Mammary epithelial cell (primary cell): ENCODE measurements at regions of chr2 and their contacts with region 1.

Region 1: GRCh38 chr2:224086226-224086914 is 47.3 kb upstream of the SERPINE2 start:
- DNase-seq: peak; percentile 97
- H3K4me3 ChIP-seq: no peak overlapping the region
- H3K27ac ChIP-seq: peak overlapping the region; percentile 93
- H3K4me1 ChIP-seq: peaks cover 31% of the 10 kb centered on the region
- H3K27me3 ChIP-seq: no peaks in the 10 kb centered on the region
- CTCF ChIP-seq: no peak

Region 2: GRCh38 chr2:223528036-223528435 is 558.3 kb before region 1 on chr2:
- CTCF ChIA-PET with region 1: no interaction called
- dilution Hi-C with region 1: no loop called
- in situ Hi-C with region 1: no loop called
- intact Hi-C with region 1: no loop called
- DNase-seq: peak; percentile 82
- H3K4me3 ChIP-seq: no peak overlapping the region
- H3K27ac ChIP-seq: no peak overlapping the region
- H3K4me1 ChIP-seq: peaks cover 30% of the 10 kb centered on the region
- H3K27me3 ChIP-seq: no peaks in the 10 kb centered on the region
- CTCF ChIP-seq: no peak

Region 3: DNA sequence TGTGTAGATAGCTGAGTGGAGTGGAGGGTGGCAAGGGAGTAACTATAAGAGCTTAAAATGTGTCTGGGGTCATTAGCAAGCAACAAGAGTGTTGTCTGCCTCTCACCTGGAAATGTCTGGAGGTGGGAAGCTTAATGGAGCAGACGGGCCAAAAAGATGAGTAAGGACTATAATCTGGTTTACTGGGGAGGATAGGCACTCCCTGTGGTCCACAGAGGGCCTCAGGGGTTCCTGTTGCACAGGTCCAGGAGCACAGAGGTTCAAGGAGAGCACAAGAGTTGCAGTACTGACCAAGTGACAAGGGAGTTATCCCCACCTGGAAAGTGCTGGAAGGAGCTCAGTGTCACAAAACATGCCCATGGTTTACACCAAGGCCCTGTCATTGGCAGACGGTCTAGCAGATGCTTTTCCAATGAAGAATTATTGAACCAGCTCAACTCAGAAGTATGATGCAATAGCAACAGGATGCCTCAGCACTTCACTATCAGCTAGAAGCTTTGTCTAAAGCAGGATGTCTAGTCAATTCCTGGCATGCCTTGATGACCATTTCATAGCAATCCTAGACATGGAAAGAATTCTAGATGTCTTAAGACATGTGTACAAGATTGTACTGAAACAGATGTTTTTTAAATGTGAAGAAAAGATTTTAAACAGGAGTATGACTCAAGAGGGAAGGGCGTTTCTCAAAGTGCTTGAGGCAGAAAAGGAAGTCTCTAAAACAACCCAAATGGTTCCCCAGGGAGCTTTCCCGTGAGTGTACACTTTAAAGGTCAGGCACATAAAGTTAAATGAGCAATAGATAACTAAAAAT is 15.7 kb after region 1 on chr2:
- CTCF ChIA-PET with region 1: no interaction called
- dilution Hi-C with region 1: no loop called
- in situ Hi-C with region 1: no loop called
- intact Hi-C with region 1: loop called (anchors 1 kb)
- DNase-seq: peak; percentile 94
- H3K4me3 ChIP-seq: no peak overlapping the region
- H3K27ac ChIP-seq: peak overlapping the region; percentile 54
- H3K4me1 ChIP-seq: peaks cover 45% of the 10 kb centered on the region
- H3K27me3 ChIP-seq: no peaks in the 10 kb centered on the region
- CTCF ChIP-seq: no peak

Region 4: DNA sequence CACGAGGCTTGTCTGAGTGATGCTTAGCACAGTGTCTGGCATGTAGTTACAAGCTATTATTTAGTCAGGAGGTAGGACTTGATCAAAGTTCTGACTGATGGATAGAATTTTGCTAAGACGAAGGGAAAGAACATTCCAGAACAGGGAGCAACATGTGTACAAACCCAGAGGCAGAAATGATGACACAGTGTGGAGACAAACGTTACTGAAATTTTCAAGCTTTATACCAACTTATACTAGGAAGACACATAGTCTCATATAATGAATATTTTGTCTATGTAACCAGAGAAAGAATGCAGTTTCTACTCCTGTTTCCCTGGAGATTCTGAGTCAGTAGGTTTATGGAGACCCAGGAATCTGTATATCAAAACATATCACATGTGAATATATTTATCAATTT is 192.2 kb after region 1 on chr2:
- CTCF ChIA-PET with region 1: no interaction called
- dilution Hi-C with region 1: no loop called
- in situ Hi-C with region 1: no loop called
- intact Hi-C with region 1: loop called (anchors 2 kb)
- DNase-seq: peak; percentile 78
- H3K4me3 ChIP-seq: no peak overlapping the region
- H3K27ac ChIP-seq: no peak overlapping the region
- H3K4me1 ChIP-seq: no peaks in the 10 kb centered on the region
- H3K27me3 ChIP-seq: no peaks in the 10 kb centered on the region
- CTCF ChIP-seq: peak in 1 of 2 donors; percentile 33